ENCODE measurements at regions of chr2 and their contacts with region 1.

Region 1: GRCh38 chr2:135004005-135004746 is 43.1 kb downstream of the MAP3K19 start:
- DNase-seq: peak; percentile 79
- ATAC-seq: peak; percentile 96
- H3K4me3 Mint-ChIP-seq: no peak overlapping the region
- H3K27ac Mint-ChIP-seq: no peak overlapping the region
- H3K4me1 Mint-ChIP-seq: peaks cover 5% of the 10 kb centered on the region
- H3K27me3 Mint-ChIP-seq: peaks cover 8% of the 10 kb centered on the region
- CTCF ChIP-seq: peak; percentile 94

Region 2: DNA sequence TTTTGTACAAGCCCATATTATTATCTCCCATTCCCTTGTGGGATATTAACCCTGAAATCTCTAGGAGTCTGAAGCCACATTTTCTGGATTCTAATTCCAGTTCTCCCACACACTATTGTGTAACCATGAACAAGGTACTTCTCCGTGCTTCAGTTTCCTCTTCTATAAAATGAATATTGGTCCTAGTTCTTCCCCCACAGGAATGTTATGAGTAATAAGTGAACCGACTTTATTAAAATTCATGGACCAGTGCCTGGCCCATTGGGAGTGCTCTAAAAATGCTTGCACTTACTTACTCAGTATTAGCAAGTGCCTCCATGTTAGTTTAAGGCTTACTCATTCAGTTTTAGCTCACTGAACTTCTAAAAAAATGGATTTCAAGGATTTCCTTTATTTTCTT is 167.2 kb before region 1 on chr2:
- CTCF ChIA-PET with region 1: no interaction called
- POLR2A ChIA-PET with region 1: no interaction called
- intact Hi-C with region 1: no loop called
- DNase-seq: no peak
- ATAC-seq: no peak
- H3K4me3 Mint-ChIP-seq: no peak overlapping the region
- H3K27ac Mint-ChIP-seq: no peak overlapping the region
- H3K4me1 Mint-ChIP-seq: no peaks in the 10 kb centered on the region
- H3K27me3 Mint-ChIP-seq: peaks cover 17% of the 10 kb centered on the region
- CTCF ChIP-seq: no peak

Region 3: DNA sequence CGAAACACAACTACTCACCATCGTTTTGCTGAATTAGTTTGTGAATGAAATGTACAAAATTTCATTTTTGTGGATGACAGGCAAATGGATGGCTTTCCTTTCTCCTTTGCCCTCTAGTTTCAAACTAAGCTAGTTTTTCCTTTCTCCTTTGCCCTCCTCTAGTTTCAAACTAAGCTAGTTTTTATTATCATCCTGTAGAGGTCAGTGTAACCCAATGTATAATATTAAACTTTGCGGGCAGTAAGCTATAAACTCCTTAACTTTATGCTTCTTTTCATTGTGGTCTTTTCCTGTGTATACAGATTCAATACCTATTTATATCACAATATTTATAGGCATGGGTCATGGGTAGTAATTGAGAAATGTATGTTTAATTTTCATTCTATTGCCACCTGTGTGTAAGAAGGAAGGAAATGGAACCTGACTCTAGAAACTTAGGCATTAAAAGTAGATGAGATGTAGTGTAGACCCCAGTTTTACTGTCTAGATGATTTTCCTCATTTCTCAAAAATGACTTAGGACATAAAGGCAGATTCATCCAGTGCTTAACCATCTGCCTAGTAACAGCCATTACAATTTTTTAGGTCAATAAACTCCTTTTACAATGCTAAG is 15.1 kb before region 1 on chr2:
- CTCF ChIA-PET with region 1: interaction called, 25 read pairs
- POLR2A ChIA-PET with region 1: no interaction called
- intact Hi-C with region 1: no loop called
- DNase-seq: no peak
- ATAC-seq: no peak
- H3K4me3 Mint-ChIP-seq: no peak overlapping the region
- H3K27ac Mint-ChIP-seq: no peak overlapping the region
- H3K4me1 Mint-ChIP-seq: no peaks in the 10 kb centered on the region
- H3K27me3 Mint-ChIP-seq: peaks cover 1% of the 10 kb centered on the region
- CTCF ChIP-seq: peak; percentile 67

Region 4: GRCh38 chr2:135023886-135024485 is 19.8 kb after region 1 on chr2:
- CTCF ChIA-PET with region 1: interaction called, 39 read pairs
- POLR2A ChIA-PET with region 1: no interaction called
- intact Hi-C with region 1: no loop called
- DNase-seq: peak; percentile 4
- ATAC-seq: peak; percentile 66
- H3K4me3 Mint-ChIP-seq: peak overlapping the region; percentile 14
- H3K27ac Mint-ChIP-seq: peak overlapping the region; percentile 26
- H3K4me1 Mint-ChIP-seq: peaks cover 19% of the 10 kb centered on the region
- H3K27me3 Mint-ChIP-seq: no peaks in the 10 kb centered on the region
- CTCF ChIP-seq: no peak

Region 5: GRCh38 chr2:135052042-135052876 is 48.1 kb after region 1 on chr2 and contains the start of gene RAB3GAP1:
- CTCF ChIA-PET with region 1: interaction called, 10 read pairs
- POLR2A ChIA-PET with region 1: interaction called, 3 read pairs
- intact Hi-C with region 1: no loop called
- DNase-seq: peak; percentile 96
- ATAC-seq: peak; percentile 82
- H3K4me3 Mint-ChIP-seq: peak within 1 kb of the TSS; percentile 94
- H3K27ac Mint-ChIP-seq: peak within 1 kb of the TSS; percentile 100
- H3K4me1 Mint-ChIP-seq: peaks cover 34% of the 10 kb centered on the region
- H3K27me3 Mint-ChIP-seq: no peaks in the 10 kb centered on the region
- CTCF ChIP-seq: no peak
- total RNA-seq, gene RAB3GAP1: 24.7 to 25.6 TPM

Region 6: GRCh38 chr2:135473567-135473966 is 469.4 kb after region 1 on chr2:
- CTCF ChIA-PET with region 1: interaction called, 8 read pairs
- POLR2A ChIA-PET with region 1: no interaction called
- intact Hi-C with region 1: loop called (anchors 10 kb)
- DNase-seq: peak; percentile 45
- ATAC-seq: peak; percentile 37
- H3K4me3 Mint-ChIP-seq: no peak overlapping the region
- H3K27ac Mint-ChIP-seq: no peak overlapping the region
- H3K4me1 Mint-ChIP-seq: peaks cover 8% of the 10 kb centered on the region
- H3K27me3 Mint-ChIP-seq: no peaks in the 10 kb centered on the region
- CTCF ChIP-seq: peak; percentile 35

Region 7: DNA sequence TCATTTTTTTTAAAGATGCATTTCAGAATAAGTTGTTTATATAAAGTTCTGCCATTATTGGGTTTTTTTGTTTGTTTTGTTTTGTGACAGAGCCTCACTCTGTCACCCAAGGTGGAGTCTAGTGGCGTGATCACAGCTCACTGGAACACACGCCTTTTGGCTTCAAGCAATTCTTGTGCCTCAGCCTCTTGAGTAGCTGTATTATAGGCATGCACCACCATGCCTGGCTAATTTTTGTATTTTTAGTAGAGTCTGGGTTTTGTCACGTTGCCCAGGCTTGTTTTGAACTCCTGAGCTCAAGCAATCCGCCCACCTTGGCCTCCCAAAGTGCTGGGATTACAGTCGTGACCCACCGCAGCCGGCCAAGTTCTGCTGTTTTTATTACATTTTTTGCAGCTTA is 599.4 kb after region 1 on chr2:
- CTCF ChIA-PET with region 1: interaction called, 10 read pairs
- POLR2A ChIA-PET with region 1: no interaction called
- intact Hi-C with region 1: no loop called
- DNase-seq: no peak
- ATAC-seq: no peak
- H3K4me3 Mint-ChIP-seq: no peak overlapping the region
- H3K27ac Mint-ChIP-seq: no peak overlapping the region
- H3K4me1 Mint-ChIP-seq: no peaks in the 10 kb centered on the region
- H3K27me3 Mint-ChIP-seq: no peaks in the 10 kb centered on the region
- CTCF ChIP-seq: no peak

Region 8: GRCh38 chr2:135709992-135710391 is 705.8 kb after region 1 on chr2:
- CTCF ChIA-PET with region 1: interaction called, 79 read pairs
- POLR2A ChIA-PET with region 1: no interaction called
- intact Hi-C with region 1: loop called (anchors 5 kb)
- DNase-seq: peak; percentile 83
- ATAC-seq: peak; percentile 89
- H3K4me3 Mint-ChIP-seq: no peak overlapping the region
- H3K27ac Mint-ChIP-seq: no peak overlapping the region
- H3K4me1 Mint-ChIP-seq: peaks cover 2% of the 10 kb centered on the region
- H3K27me3 Mint-ChIP-seq: no peaks in the 10 kb centered on the region
- CTCF ChIP-seq: peak; percentile 97